Right cardiac atrium (tissue), 5 donors: ENCODE measurements at regions of chr14 and their contacts with region 1.

Region 1: DNA sequence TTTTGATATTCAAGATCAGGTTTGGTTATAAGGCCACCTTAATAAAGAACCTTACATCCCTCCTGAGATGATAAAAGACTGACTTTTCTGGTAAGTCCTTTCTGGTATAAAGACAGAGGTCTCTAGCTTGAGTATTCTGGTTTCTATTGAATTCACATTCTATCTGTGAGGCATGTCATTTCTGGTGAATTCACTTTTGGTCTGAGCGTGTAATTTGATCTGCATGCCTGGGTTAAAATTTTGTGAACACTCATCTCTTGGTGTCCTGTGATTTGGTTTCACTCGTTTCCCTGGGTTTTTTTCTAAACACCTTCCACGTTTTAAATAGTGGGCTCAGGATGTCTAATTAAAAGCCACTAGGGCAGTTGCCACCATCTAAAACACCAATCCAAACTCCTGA is 12.2 kb downstream of the EIF5 start:
- DNase-seq: no peak
- ATAC-seq: no peak
- H3K4me3 ChIP-seq: no peak overlapping the region
- H3K27ac ChIP-seq: no peak overlapping the region
- H3K4me1 ChIP-seq: no peaks in the 10 kb centered on the region
- H3K27me3 ChIP-seq: no peaks in the 10 kb centered on the region

Region 2: DNA sequence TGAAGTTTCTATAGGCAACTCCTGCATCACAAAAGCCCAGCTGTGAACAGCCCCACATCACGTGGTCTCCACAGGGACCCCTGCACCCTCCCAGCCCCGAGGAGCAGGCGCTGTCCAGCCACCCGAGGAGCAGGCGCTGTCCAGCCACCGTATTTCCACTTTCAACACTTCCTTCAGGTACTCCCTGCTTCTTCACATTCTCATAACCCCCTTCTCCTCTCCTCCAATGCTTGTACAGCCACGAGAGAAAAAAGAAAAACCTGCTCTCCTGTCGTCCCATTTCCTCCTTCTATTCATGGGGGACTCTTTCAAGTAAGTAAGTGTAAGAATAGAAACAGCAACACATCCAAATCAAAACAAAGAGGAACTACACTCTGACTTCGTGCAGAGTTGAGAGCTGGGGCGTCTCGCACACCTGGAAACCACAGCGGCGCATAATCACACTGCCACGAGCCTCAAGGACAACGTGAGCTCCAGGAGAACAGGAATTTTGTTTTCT is 300.9 kb before region 1 on chr14:
- intact Hi-C with region 1: no loop called
- DNase-seq: no peak
- ATAC-seq: no peak
- H3K4me3 ChIP-seq: no peak overlapping the region
- H3K27ac ChIP-seq: no peak overlapping the region
- H3K4me1 ChIP-seq: peaks cover 18% of the 10 kb centered on the region
- H3K27me3 ChIP-seq: no peaks in the 10 kb centered on the region

Region 3: DNA sequence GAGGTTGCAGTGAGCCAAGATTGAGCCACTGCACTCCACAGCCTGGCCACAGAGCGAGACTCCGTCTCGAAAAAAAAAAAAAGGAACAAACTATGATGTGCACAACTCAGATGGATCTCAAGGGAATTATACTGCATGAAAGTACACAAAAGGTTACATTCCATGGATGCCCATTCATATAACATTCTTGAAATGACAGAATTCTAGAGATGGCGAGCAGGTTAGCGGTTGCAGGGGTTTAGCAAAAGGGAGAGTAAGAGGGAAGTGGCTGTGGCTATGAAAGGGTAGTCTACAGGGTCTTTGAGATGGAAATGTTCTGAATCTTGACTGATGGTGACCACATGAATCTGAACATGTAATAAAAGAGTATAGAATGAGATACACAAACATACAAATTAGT is 126.7 kb after region 1 on chr14:
- intact Hi-C with region 1: loop called in 1 of 4 experiments (anchors 10 kb)
- DNase-seq: no peak
- ATAC-seq: no peak
- H3K4me3 ChIP-seq: no peak overlapping the region
- H3K27ac ChIP-seq: no peak overlapping the region
- H3K4me1 ChIP-seq: no peaks in the 10 kb centered on the region
- H3K27me3 ChIP-seq: no peaks in the 10 kb centered on the region